IMR-90 (cell line): ENCODE measurements at regions of chr7 and their contacts with region 1.

Region 1: DNA sequence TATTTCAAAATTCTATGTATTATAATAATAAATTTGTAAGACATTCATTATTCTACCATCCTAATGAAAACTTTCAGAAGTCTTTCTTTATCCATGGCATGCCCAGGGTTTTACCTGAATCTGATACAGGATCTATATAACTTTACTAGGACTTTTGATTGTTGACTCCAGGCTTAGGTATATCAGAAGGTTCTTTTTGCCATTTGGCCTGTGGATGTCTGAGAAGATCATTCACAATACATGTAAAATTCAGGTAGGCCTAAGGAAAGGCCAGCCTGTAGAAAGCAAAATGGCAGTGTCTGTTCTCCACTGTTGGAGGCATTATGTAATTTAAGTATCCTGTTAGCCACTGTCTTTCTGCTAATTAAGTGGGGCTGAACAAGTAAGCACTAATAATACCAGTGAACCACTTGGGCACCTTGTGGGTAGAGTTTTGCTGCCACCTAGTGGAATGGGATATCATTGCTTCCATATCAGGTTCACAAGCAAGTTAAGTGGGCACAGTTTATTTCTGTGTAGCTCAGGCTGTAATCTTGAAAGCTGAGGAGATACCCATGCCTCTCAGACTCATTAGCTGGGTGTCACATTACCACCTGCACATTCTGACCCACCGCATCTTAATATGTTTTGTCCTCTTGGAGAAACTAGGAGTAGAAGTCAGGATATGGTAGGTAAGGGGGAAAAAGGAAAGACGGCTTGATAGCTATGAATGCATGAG is 105.5 kb downstream of the SEPTIN7 start:
- DNase-seq: peak; percentile 81
- ATAC-seq: peak; percentile 90
- H3K4me3 ChIP-seq: no peak overlapping the region
- H3K27ac ChIP-seq: no peak overlapping the region
- H3K4me1 ChIP-seq: peaks cover 2% of the 10 kb centered on the region; the same call in 1 of the 2 replicates
- H3K27me3 ChIP-seq: no peaks in the 10 kb centered on the region
- CTCF ChIP-seq: peak; percentile 87
- POLR2A ChIP-seq: peak; percentile 40; the same call in 1 of the 2 replicates
- RAD21 ChIP-seq: peak; percentile 88

Region 2: GRCh38 chr7:35624299-35625186 is 281.8 kb before region 1 on chr7:
- CTCF ChIA-PET with region 1: no interaction called
- POLR2A ChIA-PET with region 1: no interaction called
- dilution Hi-C with region 1: no loop called
- in situ Hi-C with region 1: no loop called
- intact Hi-C with region 1: loop called (anchors 2 kb)
- DNase-seq: peak; percentile 29
- ATAC-seq: peak; percentile 97
- H3K4me3 ChIP-seq: no peak overlapping the region
- H3K27ac ChIP-seq: no peak overlapping the region
- H3K4me1 ChIP-seq: no peaks in the 10 kb centered on the region; the same call in 1 of the 2 replicates
- H3K27me3 ChIP-seq: no peaks in the 10 kb centered on the region
- CTCF ChIP-seq: peak; percentile 79
- POLR2A ChIP-seq: no peak
- RAD21 ChIP-seq: peak; percentile 82

Region 3: DNA sequence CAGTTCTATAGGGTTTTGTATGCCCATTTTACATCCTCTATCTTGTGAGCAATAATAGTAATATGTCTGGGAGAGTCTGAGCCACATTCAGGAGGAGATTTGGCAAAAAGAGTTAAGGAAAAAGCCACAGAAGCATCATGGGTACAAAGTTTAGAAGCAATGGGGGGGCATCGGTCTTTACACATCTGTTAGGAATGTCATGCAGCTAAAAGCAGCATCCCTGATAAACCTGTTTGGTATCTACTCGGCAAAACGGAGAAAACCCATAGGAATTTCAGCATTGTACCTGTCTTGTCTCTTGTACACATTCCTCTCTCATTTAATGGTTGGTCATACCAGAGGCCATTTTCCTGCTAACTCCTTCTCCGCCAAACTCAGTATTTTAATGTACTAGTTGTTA is 198.9 kb before region 1 on chr7:
- CTCF ChIA-PET with region 1: interaction called, 8 read pairs
- POLR2A ChIA-PET with region 1: no interaction called
- dilution Hi-C with region 1: no loop called
- in situ Hi-C with region 1: loop called (anchors 5 kb)
- intact Hi-C with region 1: loop called (anchors 1 kb)
- DNase-seq: peak; percentile 60
- ATAC-seq: 0 out of 2 replicates have a peak, but pooled peaks have one; percentile 15
- H3K4me3 ChIP-seq: no peak overlapping the region
- H3K27ac ChIP-seq: no peak overlapping the region
- H3K4me1 ChIP-seq: peaks cover 7% of the 10 kb centered on the region
- H3K27me3 ChIP-seq: no peaks in the 10 kb centered on the region
- CTCF ChIP-seq: no peak
- POLR2A ChIP-seq: no peak
- RAD21 ChIP-seq: no peak

Region 4: DNA sequence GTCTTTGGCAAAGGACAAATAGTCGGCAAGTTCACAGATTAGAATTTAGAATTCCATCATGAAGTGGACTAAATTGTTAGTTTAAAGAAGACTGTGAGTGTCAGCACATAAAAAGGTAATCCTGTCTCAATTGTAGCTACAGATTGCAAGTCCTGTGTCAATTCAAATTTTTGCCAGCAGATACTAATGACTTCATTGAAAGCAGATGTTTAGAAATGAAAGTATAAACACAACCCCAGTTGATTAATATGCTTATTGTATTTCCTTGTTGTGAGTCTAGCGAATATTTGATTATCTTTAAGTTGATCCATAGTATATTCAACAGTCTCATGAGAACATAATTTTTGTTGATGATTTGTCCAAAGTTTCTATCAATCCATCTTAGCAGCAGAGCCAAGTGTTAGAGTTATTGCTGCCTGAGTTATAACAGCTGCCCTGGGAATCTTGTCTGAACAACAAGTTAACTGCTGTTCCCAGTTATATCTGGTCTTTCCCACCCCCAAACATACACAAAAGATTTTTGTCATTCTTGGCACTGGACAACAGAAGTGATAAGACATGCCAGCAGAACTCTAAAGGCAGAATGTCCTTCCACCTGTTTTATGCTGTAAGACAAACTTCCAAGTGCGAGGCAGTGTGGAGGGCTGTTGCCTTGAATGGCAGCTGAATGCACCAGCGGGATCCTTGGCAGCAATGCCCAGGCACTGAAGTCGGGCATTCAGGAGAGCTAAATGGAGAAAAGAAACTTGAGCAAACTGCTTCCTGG is 190.1 kb before region 1 on chr7:
- CTCF ChIA-PET with region 1: no interaction called
- POLR2A ChIA-PET with region 1: no interaction called
- dilution Hi-C with region 1: no loop called
- in situ Hi-C with region 1: loop called (anchors 5 kb)
- intact Hi-C with region 1: no loop called
- DNase-seq: peak; percentile 54
- ATAC-seq: peak; percentile 74
- H3K4me3 ChIP-seq: no peak overlapping the region
- H3K27ac ChIP-seq: peak overlapping the region; percentile 15; the same call in 1 of the 2 replicates
- H3K4me1 ChIP-seq: peaks cover 4% of the 10 kb centered on the region; the same call in 1 of the 2 replicates
- H3K27me3 ChIP-seq: no peaks in the 10 kb centered on the region; the same call in 1 of the 2 replicates
- CTCF ChIP-seq: no peak
- POLR2A ChIP-seq: no peak
- RAD21 ChIP-seq: no peak

Region 5: DNA sequence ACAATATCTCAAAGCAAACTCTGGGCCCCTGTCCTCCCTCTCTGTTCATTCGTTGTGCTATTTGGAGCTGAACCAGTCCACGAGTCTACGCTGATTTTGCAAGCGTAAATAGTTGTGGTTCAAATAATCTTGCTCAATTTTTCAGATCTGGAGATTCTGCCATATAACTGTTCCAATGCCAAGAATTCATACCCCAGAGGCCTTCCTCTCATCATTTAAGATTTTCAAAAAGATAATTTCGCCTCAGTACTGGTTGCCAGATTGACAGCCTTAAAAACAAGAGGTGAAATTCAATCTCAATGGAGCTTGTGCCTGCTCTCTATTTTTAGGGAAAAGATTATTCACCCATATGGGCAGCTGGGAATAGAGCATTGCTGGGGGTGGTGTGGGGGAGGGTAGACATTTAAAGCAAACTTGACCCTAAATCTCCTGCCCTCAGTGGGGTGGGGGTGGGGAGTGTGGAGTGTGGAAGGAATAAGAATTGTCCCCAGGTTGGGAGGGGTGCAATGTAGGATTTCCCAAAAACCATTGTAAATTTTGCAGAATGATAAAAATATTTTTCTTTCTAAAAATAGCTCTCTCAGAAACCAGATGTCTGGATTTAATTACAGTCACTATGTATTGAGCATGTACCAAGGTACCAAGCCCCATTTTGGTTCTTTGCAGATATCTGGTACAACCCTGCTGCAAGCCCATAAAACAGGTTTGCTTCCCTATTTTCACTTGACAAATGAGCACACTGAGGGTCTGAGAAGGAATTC is 142.0 kb after region 1 on chr7:
- CTCF ChIA-PET with region 1: no interaction called
- POLR2A ChIA-PET with region 1: no interaction called
- dilution Hi-C with region 1: no loop called
- in situ Hi-C with region 1: no loop called
- intact Hi-C with region 1: no loop called
- DNase-seq: peak; percentile 83
- ATAC-seq: peak; percentile 77
- H3K4me3 ChIP-seq: no peak overlapping the region
- H3K27ac ChIP-seq: no peak overlapping the region; the same call in 1 of the 2 replicates
- H3K4me1 ChIP-seq: peaks cover 22% of the 10 kb centered on the region
- H3K27me3 ChIP-seq: no peaks in the 10 kb centered on the region
- CTCF ChIP-seq: no peak
- POLR2A ChIP-seq: no peak
- RAD21 ChIP-seq: no peak

Region 6: GRCh38 chr7:37549076-37549941 is 1643.0 kb after region 1 on chr7:
- CTCF ChIA-PET with region 1: no interaction called
- POLR2A ChIA-PET with region 1: no interaction called
- dilution Hi-C with region 1: no loop called
- in situ Hi-C with region 1: no loop called
- intact Hi-C with region 1: no loop called
- DNase-seq: no peak
- ATAC-seq: no peak
- H3K4me3 ChIP-seq: no peak overlapping the region
- H3K27ac ChIP-seq: no peak overlapping the region
- H3K4me1 ChIP-seq: no peaks in the 10 kb centered on the region
- H3K27me3 ChIP-seq: no peaks in the 10 kb centered on the region
- CTCF ChIP-seq: no peak
- POLR2A ChIP-seq: no peak
- RAD21 ChIP-seq: no peak